ENCODE measurements at regions of chr1 and their contacts with region 1.

Region 1: DNA sequence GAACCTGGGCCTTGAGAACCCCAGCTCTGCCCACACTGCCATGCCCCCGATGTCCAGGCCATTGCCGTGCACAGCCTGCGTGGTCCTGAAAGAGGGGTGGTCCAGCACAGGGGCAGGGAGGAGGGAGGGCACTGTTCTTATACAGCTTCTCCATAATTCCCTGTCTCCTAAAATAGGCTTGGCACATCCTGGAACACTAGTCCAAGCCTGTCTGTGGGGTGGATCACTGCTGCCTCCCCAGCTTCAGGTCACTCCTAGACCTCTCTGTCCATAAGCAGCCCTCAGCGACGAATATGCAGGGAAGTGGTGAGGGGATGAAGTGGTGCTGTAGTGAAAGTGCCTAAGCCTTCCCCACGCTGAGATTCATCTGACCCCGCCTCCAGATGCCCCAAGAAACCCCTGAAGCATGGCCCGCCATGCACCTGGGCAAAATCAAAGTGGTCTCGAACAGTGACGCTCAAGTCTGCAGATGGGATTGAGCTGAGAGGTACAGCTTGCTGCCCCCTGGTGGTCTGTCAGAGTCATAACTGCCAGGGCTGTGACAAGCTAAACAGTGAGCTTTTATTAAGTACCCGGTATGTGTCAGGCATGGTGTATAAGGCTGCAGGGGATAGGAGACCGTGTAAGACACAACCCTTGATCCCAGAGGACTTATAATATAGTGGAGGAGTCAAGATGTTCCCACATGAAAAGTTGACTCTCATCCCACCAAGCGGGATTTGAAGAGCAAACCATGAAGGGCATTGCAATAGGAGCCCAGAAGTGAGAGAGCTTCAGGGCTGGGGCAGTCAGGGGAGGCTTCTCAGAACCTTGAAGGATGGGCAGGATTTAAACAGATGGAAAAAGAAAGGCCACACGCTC is 66.6 kb downstream of the FAM163A start:
- DNase-seq: peak; percentile 49 to 81
- H3K4me3 ChIP-seq: no peak overlapping the region
- H3K27ac ChIP-seq: no peak overlapping the region
- H3K4me1 ChIP-seq: peaks cover 0 to 4% (median under 1%) of the 10 kb centered on the region in 4 experiments; a peak in 3 of 7 replicates
- H3K27me3 ChIP-seq: peaks cover 0 to 6% (median 3%) of the 10 kb centered on the region in 4 experiments; a peak in 4 of 7 replicates
- CTCF ChIP-seq: peak; percentile 84 to 97 (median 89)
- EP300 ChIP-seq: no peak
- POLR2A ChIP-seq: no peak
- RAD21 ChIP-seq: peak; percentile 82 to 89

Region 2: GRCh38 chr1:179706339-179706941 is 103.3 kb before region 1 on chr1:
- CTCF ChIA-PET with region 1: interaction called, 595 read pairs
- POLR2A ChIA-PET with region 1: interaction called, 5 read pairs
- DNase-seq: peak in 1 of 2 experiments; percentile 63
- H3K4me3 ChIP-seq: no peak overlapping the region
- H3K27ac ChIP-seq: no peak overlapping the region
- H3K4me1 ChIP-seq: no peaks in the 10 kb centered on the region
- H3K27me3 ChIP-seq: no peaks in the 10 kb centered on the region
- CTCF ChIP-seq: peak in 2 of 3 experiments; percentile 68 to 85; a peak in 3 of 4 replicates
- EP300 ChIP-seq: no peak
- POLR2A ChIP-seq: no peak
- RAD21 ChIP-seq: peak; percentile 95 to 96

Region 3: DNA sequence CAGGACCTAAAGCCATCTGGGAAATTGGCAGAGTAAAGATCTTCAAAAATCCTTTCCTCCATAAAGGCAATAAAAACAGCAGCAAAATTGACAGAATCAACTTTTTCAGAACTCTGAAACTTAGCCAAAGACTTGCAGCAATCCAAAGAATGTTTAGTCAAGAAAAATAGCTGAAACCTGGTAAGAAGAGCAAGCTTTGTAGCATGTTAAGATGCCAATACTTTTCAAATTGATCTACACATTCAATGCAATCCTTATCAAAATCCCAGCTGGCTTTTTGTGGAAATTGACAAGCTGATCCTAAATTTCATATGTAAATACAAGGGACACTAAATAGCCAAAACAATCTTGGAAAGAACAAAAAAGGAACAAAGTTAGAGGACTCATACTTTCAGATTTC is 90.5 kb before region 1 on chr1:
- CTCF ChIA-PET with region 1: interaction called, 595 read pairs
- POLR2A ChIA-PET with region 1: no interaction called
- DNase-seq: no peak
- H3K4me3 ChIP-seq: no peak overlapping the region
- H3K27ac ChIP-seq: no peak overlapping the region
- H3K4me1 ChIP-seq: no peaks in the 10 kb centered on the region
- H3K27me3 ChIP-seq: no peaks in the 10 kb centered on the region
- CTCF ChIP-seq: no peak
- EP300 ChIP-seq: no peak
- POLR2A ChIP-seq: no peak
- RAD21 ChIP-seq: no peak

Region 4: GRCh38 chr1:179761296-179761695 is 48.4 kb before region 1 on chr1:
- CTCF ChIA-PET with region 1: interaction called, 28 read pairs
- POLR2A ChIA-PET with region 1: no interaction called
- DNase-seq: no peak
- H3K4me3 ChIP-seq: no peak overlapping the region
- H3K27ac ChIP-seq: no peak overlapping the region
- H3K4me1 ChIP-seq: no peaks in the 10 kb centered on the region
- H3K27me3 ChIP-seq: no peaks in the 10 kb centered on the region
- CTCF ChIP-seq: no peak
- EP300 ChIP-seq: no peak
- POLR2A ChIP-seq: no peak
- RAD21 ChIP-seq: no peak

Region 5: GRCh38 chr1:179781962-179782361 is 27.8 kb before region 1 on chr1:
- CTCF ChIA-PET with region 1: interaction called, 32 read pairs
- POLR2A ChIA-PET with region 1: interaction called, 3 read pairs
- DNase-seq: no peak
- H3K4me3 ChIP-seq: no peak overlapping the region
- H3K27ac ChIP-seq: no peak overlapping the region
- H3K4me1 ChIP-seq: no peaks in the 10 kb centered on the region
- H3K27me3 ChIP-seq: no peaks in the 10 kb centered on the region
- CTCF ChIP-seq: no peak
- EP300 ChIP-seq: no peak
- POLR2A ChIP-seq: no peak
- RAD21 ChIP-seq: no peak

Region 6: DNA sequence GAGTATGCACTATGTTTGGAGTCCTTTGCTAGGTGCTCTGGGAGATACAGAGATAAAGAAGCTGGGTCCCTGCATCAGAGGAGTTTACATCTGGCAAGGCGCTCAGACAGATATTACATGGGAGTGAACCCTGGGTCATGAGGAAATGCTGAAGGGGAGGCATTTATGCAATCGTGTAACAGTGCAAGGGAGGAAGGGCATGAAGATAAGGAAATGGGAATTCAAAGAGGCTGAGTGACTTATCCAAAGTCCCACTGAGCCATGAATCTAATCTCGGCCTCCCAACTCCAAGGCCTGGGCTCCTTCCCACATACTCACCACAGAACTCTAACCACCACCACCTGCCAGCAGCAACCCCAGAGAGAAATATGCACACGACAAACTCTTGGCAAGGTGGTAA is 15.1 kb before region 1 on chr1:
- CTCF ChIA-PET with region 1: interaction called, 74 read pairs
- POLR2A ChIA-PET with region 1: interaction called, 4 read pairs
- DNase-seq: no peak
- H3K4me3 ChIP-seq: no peak overlapping the region
- H3K27ac ChIP-seq: no peak overlapping the region
- H3K4me1 ChIP-seq: no peaks in the 10 kb centered on the region; a peak in 1 of 7 replicates
- H3K27me3 ChIP-seq: no peaks in the 10 kb centered on the region
- CTCF ChIP-seq: no peak
- EP300 ChIP-seq: no peak
- POLR2A ChIP-seq: no peak
- RAD21 ChIP-seq: no peak

Region 7: DNA sequence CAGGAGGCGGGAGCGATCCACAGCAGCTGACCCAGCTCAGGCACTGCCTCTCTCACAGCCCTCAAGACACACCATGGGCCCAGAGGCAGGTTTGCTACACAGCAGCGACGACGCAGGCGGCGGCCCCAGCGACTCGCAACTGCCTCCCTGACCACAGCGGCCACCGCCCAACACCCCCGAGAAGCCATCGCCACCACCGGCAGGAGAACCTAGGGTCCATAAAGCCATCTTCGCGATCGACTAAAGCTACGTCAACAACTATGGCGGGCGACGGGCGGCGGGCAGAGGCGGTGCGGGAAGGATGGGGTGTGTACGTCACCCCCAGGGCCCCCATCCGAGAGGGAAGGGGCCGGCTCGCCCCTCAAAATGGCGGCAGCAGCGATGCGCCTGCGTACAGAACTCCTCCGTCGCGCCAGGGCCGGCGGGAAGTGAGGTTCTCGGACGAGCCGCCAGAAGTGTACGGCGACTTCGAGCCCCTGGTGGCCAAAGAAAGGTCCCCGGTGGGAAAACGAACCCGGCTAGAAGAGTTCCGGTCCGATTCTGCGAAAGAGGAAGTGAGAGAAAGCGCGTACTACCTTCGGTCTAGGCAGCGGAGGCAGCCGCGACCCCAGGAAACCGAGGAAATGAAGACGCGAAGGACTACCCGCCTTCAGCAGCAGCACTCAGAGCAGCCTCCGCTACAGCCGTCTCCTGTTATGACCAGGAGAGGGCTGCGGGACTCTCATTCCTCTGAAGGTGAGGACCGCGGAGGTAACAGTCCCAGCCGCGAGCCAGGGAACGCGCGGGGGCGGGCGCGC is 72.7 kb after region 1 on chr1 and contains the start of gene TOR1AIP1:
- CTCF ChIA-PET with region 1: interaction called, 12 read pairs
- POLR2A ChIA-PET with region 1: interaction called, 4 read pairs
- DNase-seq: peak; percentile 94 to 95
- H3K4me3 ChIP-seq: peak within 1 kb of the TSS; percentile 87 to 92 (median 90)
- H3K27ac ChIP-seq: peak within 1 kb of the TSS; percentile 99
- H3K4me1 ChIP-seq: peaks cover 0 to 3% (median 0%) of the 10 kb centered on the region in 4 experiments; a peak in 1 of 7 replicates
- H3K27me3 ChIP-seq: no peaks in the 10 kb centered on the region
- CTCF ChIP-seq: peak in 1 of 3 experiments; percentile 19; a peak in 2 of 4 replicates
- EP300 ChIP-seq: peak in 1 of 2 experiments; percentile 86; a peak in 1 of 3 replicates
- POLR2A ChIP-seq: peak; percentile 82
- RAD21 ChIP-seq: peak; percentile 3 to 18; a peak in 3 of 4 replicates
- total RNA-seq, gene TOR1AIP1: 22.0 and 22.8 TPM in 2 replicates